ENCODE measurements at regions of chr12 and their contacts with region 1.

Region 1: GRCh38 chr12:12786716-12787601 is 1.5 kb downstream of the APOLD1 start:
- DNase-seq: peak; percentile 53 to 85 (median 70)
- H3K4me3 ChIP-seq: peak overlapping the region; percentile 47 to 92 (median 81)
- H3K27ac ChIP-seq: peak overlapping the region; percentile 83 to 100 (median 97)
- H3K27me3 ChIP-seq: no peaks in the 10 kb centered on the region
- CTCF ChIP-seq: peak in 43 of 56 donors; percentile 9 to 60 (median 33)

Region 2: DNA sequence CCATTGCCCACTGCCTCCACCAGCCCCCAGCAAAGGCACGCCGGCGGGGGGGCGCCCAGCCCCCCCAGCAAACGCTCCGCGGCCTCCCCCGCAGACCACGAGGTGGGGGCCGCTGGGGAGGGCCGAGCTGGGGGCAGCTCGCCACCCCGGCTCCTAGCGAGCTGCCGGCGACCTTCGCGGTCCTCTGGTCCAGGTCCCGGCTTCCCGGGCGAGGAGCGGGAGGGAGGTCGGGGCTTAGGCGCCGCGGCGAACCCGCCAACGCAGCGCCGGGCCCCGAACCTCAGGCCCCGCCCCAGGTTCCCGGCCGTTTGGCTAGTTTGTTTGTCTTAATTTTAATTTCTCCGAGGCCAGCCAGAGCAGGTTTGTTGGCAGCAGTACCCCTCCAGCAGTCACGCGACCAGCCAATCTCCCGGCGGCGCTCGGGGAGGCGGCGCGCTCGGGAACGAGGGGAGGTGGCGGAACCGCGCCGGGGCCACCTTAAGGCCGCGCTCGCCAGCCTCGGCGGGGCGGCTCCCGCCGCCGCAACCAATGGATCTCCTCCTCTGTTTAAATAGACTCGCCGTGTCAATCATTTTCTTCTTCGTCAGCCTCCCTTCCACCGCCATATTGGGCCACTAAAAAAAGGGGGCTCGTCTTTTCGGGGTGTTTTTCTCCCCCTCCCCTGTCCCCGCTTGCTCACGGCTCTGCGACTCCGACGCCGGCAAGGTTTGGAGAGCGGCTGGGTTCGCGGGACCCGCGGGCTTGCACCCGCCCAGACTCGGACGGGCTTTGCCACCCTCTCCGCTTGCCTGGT is 70.0 kb before region 1 on chr12 and contains the start of gene CDKN1B:
- intact Hi-C with region 1: loop called in 1 of 2 experiments (anchors 5 kb)
- DNase-seq: peak; percentile 79 to 92 (median 90)
- H3K4me3 ChIP-seq: peak within 1 kb of the TSS; percentile 54 to 100 (median 95)
- H3K27ac ChIP-seq: peak within 1 kb of the TSS; percentile 98 to 100 (median 100)
- H3K27me3 ChIP-seq: no peaks in the 10 kb centered on the region
- CTCF ChIP-seq: peak in 20 of 56 donors; percentile 6 to 41 (median 22)
- total RNA-seq, gene CDKN1B: 58.4 to 148 (median 88.8) TPM

Region 3: GRCh38 chr12:12724661-12725545 is 62.1 kb before region 1 on chr12:
- intact Hi-C with region 1: loop called in 1 of 2 experiments (anchors 5 kb)
- DNase-seq: peak in 9 of 10 donors; percentile 73 to 94 (median 90)
- H3K4me3 ChIP-seq: peak overlapping the region; percentile 61 to 100 (median 83)
- H3K27ac ChIP-seq: peak overlapping the region; percentile 97 to 100 (median 100)
- H3K27me3 ChIP-seq: no peaks in the 10 kb centered on the region
- CTCF ChIP-seq: peak in 8 of 56 donors; percentile 6 to 34 (median 14)